PC-9 (cell line): ENCODE measurements at regions of chr7 and their contacts with region 1.

Region 1: GRCh38 chr7:86939197-86939814 is 120.1 kb downstream of the ELAPOR2 start:
- DNase-seq: peak; percentile 51 to 55
- H3K4me3 ChIP-seq: no peak overlapping the region
- H3K27ac ChIP-seq: no peak overlapping the region
- H3K4me1 ChIP-seq: no peaks in the 10 kb centered on the region
- H3K27me3 ChIP-seq: no peaks in the 10 kb centered on the region
- CTCF ChIP-seq: peak; percentile 83

Region 2: DNA sequence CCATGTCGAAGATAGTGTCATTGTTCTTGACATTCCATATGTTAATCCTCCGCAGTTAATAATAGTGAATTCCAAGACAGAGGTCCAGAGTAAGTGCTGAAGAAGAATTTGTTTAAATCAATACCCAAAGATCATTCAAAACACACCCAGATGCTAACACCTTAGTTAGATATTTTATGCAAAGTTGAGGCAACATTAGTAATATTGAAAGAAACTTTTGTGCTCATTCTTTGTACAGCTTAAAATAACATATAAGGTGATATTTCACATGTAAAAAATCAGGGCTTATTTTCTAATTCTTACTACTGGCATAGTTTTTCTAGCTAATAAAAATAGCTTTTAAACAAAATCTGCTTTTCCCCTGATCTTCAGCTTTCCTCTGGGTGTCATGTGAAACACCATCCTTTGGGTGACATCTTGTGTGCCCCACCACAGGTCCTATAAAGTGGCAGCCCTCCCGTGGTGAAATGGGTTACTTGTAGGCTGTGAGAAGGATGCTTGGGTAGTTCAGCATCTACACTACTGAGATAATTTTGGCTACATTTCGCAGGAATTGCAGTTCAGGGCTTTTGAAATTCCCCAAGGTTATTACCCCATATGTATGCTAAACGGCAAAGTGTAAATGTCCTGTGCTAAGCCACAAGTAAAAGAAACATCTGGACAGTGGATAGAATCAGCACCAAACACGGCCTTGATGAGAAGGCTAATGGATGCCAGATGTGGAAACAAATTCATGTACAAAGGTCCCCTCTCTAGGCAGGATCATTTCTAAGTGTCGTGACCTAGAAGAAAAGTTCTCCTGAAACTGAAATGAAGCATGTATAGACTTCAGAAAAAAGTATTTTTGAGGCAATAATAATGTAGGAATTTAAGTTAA is 190.2 kb before region 1 on chr7:
- CTCF ChIA-PET with region 1: no interaction called
- POLR2A ChIA-PET with region 1: no interaction called
- intact Hi-C with region 1: no loop called
- DNase-seq: no peak
- H3K4me3 ChIP-seq: no peak overlapping the region
- H3K27ac ChIP-seq: no peak overlapping the region
- H3K4me1 ChIP-seq: no peaks in the 10 kb centered on the region
- H3K27me3 ChIP-seq: no peaks in the 10 kb centered on the region
- CTCF ChIP-seq: no peak

Region 3: DNA sequence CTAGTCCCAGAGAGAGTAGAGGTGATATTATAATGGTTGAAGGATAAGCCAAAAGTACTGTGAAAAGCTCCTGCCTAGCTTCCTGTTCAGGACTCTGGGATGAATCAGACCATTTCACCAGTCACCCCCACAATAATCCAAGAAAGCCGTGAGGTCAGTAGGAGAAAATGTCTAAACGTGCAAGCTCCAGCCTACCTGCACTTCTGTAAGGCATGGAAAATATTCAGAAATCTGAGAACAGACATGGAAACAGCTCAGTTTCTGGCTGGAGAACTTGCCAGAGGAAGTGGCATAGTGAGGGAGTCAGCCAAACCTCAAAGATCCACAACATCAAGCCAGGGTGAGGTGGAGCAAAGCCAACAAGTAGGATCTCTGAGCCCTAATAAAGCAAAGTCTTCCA is 61.9 kb after region 1 on chr7:
- CTCF ChIA-PET with region 1: no interaction called
- POLR2A ChIA-PET with region 1: no interaction called
- intact Hi-C with region 1: no loop called
- DNase-seq: no peak
- H3K4me3 ChIP-seq: no peak overlapping the region
- H3K27ac ChIP-seq: no peak overlapping the region
- H3K4me1 ChIP-seq: no peaks in the 10 kb centered on the region
- H3K27me3 ChIP-seq: no peaks in the 10 kb centered on the region
- CTCF ChIP-seq: no peak

Region 4: DNA sequence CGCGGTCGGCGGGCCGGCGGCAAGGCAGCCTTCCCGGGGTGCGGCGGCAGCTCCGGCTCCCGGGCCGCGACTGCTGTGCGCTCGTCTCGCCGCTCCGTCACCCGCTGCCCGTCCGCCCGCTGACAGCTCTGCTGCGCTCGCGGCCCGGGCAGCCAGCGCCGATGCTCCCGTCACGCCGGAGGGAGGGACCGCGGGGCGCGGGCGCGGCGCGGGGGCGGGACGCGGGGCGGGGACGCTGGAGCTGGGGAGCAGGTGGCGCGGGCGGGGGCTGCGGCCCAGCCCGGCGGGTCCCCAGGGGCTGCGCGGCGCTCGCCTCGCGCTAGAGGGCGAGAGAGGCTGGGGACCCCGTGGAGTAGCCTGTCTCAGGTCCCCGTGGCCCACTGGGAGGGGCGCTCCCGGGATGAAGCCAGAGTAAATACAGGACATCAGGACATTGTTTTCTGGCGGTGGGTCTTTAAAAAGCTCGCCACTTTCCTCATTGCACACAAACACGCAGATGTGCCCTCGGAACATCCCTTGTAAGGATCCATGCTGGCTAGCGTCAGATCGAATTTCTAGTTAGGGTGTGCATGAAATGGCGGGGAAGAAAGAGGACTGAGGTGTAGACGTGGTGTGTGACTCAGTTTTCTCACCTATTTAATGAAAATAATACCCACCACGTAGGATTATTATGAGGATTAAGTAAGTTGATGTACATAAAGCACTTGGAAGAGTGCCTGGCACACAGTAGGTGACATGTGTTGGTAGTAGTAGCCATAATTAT is 120.4 kb after region 1 on chr7 and contains the start of gene ELAPOR2:
- CTCF ChIA-PET with region 1: no interaction called
- POLR2A ChIA-PET with region 1: no interaction called
- intact Hi-C with region 1: loop called (anchors 10 kb)
- DNase-seq: peak in 1 of 2 experiments; percentile 84
- H3K4me3 ChIP-seq: peak within 1 kb of the TSS; percentile 69; the same call in 1 of the 2 replicates
- H3K27ac ChIP-seq: no peak within 1 kb of the TSS
- H3K4me1 ChIP-seq: peaks cover 5% of the 10 kb centered on the region; the same call in 1 of the 2 replicates
- H3K27me3 ChIP-seq: no peaks in the 10 kb centered on the region
- CTCF ChIP-seq: peak; percentile 43
- total RNA-seq, gene ELAPOR2: 10.1 and 11.0 TPM in 2 replicates

Region 5: DNA sequence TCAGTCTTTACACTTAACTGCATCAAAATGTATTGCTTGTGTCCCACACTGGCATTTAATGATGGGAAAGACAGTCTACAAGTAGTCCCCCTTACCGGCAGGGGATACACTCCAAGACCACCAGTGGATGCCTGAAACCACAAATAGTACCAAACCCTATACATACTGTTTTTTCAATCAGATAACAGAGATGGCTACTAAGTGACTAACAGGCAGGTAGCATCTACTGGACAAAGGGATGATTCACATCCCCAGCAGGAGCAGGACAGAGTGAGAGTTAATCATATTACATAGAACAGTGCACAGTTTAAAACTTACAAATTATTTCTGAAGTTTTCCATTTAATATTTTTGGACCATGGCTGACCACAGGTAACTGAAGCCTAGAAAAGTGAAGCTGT is 267.1 kb after region 1 on chr7:
- CTCF ChIA-PET with region 1: no interaction called
- POLR2A ChIA-PET with region 1: no interaction called
- intact Hi-C with region 1: no loop called
- DNase-seq: no peak
- H3K4me3 ChIP-seq: no peak overlapping the region
- H3K27ac ChIP-seq: no peak overlapping the region
- H3K4me1 ChIP-seq: no peaks in the 10 kb centered on the region
- H3K27me3 ChIP-seq: no peaks in the 10 kb centered on the region
- CTCF ChIP-seq: no peak